Ascending aorta (tissue), 2 donors: ENCODE measurements at regions of chrX and their contacts with region 1.

Region 1: DNA sequence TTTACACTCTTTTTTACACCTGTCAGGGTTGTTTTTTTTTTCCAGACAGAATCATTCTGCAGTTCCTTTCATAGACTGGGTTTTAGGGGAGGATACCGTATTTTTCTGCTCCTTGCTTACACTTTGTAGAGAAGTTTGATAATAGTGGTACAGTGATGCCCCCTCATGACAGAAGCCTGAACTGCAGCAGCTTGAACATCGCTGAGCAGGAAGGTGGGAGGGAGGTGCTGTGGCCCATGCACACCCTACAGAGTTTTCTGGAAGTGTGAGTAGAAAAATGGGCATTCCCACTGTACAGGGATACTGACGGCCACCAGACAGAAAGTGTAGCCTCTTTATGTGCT is 54.5 kb downstream of the RAB40A start:
- DNase-seq: peak in 1 of 2 donors; percentile 81
- H3K4me3 ChIP-seq: peak overlapping the region; percentile 33 to 61
- H3K27ac ChIP-seq: no peak overlapping the region
- H3K4me1 ChIP-seq: no peaks in the 10 kb centered on the region
- H3K27me3 ChIP-seq: no peaks in the 10 kb centered on the region
- CTCF ChIP-seq: peak; percentile 52 to 73 (median 69)

Region 2: DNA sequence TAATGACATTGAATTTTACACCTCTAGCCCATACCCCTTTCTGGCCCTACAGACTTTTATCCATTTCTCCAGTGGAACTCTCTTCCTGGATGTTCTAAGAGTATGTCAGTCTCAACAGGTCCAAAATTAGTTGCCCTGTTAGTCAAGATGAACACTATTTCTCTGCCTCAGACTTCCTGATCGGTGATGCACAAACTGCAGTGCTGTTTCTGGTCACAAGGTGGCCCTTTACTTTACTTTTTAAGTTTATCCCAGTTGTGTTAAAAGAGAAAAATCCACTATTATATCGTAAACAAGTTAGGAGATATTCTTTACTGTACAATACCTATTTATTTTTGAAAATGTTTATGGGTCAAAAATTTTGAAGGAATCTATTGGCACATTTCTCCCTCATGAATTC is 121.6 kb before region 1 on chrX:
- intact Hi-C with region 1: loop called (anchors 1 kb)
- DNase-seq: no peak
- H3K4me3 ChIP-seq: no peak overlapping the region
- H3K27ac ChIP-seq: no peak overlapping the region
- H3K4me1 ChIP-seq: no peaks in the 10 kb centered on the region
- H3K27me3 ChIP-seq: no peaks in the 10 kb centered on the region
- CTCF ChIP-seq: peak; percentile 24 to 68 (median 53)

Region 3: DNA sequence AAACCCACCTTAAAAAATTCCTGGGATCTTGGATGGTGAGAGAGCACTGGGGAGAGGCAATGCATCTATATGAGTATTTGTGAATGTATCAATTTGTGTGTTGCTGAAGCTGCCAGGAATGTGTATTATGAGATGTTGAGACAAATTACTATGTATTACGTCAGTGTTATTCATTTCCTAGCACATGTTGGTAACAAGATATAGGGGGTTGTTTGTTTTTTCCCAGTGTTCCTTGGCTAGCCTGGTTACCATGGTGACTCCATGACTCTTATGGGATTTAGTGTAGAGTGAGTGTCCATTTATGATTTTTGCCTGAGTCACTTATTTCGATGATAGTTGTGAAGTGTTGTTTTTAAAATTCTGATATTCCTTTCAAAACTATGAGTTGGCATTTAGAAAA is 11.1 kb before region 1 on chrX:
- intact Hi-C with region 1: no loop called
- DNase-seq: no peak
- H3K4me3 ChIP-seq: no peak overlapping the region
- H3K27ac ChIP-seq: no peak overlapping the region
- H3K4me1 ChIP-seq: no peaks in the 10 kb centered on the region
- H3K27me3 ChIP-seq: no peaks in the 10 kb centered on the region
- CTCF ChIP-seq: no peak

Region 4: DNA sequence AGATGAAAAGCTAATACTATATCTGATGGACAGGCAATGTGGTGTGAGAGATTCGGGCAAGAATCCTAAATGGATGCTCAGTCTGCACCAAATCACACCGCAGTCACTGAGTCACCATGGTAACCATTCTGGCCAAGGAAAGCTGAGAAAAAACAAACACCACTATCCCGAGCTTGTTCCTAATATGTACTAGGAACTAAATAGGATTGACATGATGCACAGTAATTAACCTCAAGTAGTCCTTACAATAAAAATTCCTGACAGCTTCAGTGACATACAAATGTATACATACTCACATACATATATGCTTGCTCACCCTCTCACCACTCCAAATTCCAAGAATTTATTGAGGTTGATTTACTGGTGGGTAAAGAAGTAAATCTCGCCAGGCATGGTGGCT is 55.6 kb after region 1 on chrX:
- intact Hi-C with region 1: no loop called
- DNase-seq: no peak
- H3K4me3 ChIP-seq: no peak overlapping the region
- H3K27ac ChIP-seq: no peak overlapping the region
- H3K4me1 ChIP-seq: no peaks in the 10 kb centered on the region
- H3K27me3 ChIP-seq: no peaks in the 10 kb centered on the region
- CTCF ChIP-seq: no peak

Region 5: DNA sequence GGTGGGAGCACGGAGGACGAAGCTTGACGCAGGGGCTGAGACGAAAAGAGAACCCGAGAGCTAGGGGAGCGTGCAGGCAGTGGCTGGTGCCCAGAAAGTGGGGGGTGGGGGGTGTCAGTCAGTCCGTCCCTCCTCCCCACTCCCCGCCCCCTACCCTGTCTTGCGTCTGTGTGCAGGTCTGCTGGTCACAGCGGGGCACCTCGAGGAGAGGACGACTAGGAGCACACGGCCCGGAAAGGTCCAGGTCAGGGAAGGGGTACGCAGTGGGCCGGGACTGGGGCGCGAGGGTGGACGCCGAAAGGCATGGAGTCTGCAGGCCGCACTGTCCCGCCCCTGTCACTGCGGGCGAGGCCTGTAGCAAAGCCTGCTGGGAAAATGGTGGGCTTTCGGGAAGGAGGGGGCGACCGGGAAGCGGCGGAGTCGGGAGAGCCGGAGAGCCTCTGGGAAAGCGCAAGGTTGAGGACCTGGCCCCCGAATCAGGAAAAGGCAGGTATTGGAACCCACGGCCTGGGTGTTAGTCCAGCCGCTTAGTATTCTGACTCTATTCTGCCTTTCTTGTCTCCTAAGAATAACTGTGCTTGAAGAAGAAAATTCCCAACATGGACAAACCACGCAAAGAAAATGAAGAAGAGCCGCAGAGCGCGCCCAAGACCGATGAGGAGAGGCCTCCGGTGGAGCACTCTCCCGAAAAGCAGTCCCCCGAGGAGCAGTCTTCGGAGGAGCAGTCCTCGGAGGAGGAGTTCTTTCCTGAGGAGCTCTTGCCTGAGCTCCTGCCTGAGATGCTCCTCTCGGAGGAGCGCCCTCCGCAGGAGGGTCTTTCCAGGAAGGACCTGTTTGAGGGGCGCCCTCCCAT is 164.8 kb after region 1 on chrX:
- intact Hi-C with region 1: no loop called
- DNase-seq: peak in 1 of 2 donors; percentile 80
- H3K4me3 ChIP-seq: peak overlapping the region; percentile 47 to 68
- H3K27ac ChIP-seq: peak overlapping the region; percentile 82 to 90
- H3K4me1 ChIP-seq: no peaks in the 10 kb centered on the region
- H3K27me3 ChIP-seq: no peaks in the 10 kb centered on the region
- CTCF ChIP-seq: peak in 1 of 3 experiments; percentile 40